ENCODE measurements at regions of chr11 and their contacts with region 1.

Region 1: DNA sequence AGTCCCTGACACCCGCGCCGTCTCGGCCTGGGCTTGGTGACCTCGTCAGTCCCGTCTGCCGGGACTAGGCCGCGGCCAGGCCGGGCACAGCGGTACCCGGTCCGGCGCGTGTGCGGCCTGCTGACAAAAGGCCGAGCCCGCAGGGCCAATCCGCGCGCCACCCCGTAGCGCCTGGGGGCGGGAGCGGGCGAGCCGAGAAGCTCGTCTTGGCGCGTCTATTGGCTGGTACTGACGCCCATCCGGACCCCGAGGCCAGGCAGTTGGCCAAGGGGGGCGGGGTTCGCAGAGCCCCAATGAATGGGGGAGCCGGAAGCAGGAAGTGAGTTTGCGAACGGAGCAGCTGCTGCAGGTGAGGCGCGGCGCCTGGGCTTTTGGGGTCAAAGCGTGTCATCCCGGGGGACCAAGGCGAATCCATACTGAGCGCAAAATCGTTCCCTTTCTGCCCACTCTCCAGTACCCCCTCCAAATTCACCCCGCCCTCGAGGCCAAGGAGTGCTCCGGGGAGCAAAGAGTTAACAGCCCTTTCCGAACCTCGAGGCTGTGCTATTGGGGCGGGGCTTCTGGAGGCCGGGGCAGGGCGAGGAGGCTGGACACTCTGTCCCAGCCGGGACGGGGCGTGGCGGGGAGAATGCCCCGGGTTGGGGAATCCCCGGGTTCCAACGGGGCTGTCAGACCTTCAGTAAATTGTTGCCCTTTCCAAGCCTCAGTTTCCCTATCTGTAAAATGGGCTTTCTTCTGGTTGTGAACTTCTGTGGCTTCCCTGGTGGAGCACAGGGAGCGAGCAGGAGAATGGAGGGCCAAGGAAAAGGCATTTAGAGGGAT is at the start of gene DPP3:
- DNase-seq: peak; percentile 99
- ATAC-seq: peak; percentile 89
- H3K4me3 ChIP-seq: peak within 1 kb of the TSS; percentile 78
- H3K27ac ChIP-seq: peak within 1 kb of the TSS; percentile 53
- H3K4me1 ChIP-seq: peaks cover 14% of the 10 kb centered on the region
- H3K27me3 ChIP-seq: no peaks in the 10 kb centered on the region
- CTCF ChIP-seq: no peak
- total RNA-seq, gene DPP3: 135 and 165 TPM in 2 replicates

Region 2: GRCh38 chr11:66195867-66196266 is 284.5 kb before region 1 on chr11:
- CTCF ChIA-PET with region 1: interaction called, 11 read pairs
- POLR2A ChIA-PET with region 1: no interaction called
- intact Hi-C with region 1: no loop called
- DNase-seq: no peak
- ATAC-seq: peak; percentile 39; the same call in 1 of the 2 replicates
- H3K4me3 ChIP-seq: no peak overlapping the region
- H3K27ac ChIP-seq: no peak overlapping the region
- H3K4me1 ChIP-seq: peaks cover 21% of the 10 kb centered on the region
- H3K27me3 ChIP-seq: no peaks in the 10 kb centered on the region
- CTCF ChIP-seq: no peak

Region 3: DNA sequence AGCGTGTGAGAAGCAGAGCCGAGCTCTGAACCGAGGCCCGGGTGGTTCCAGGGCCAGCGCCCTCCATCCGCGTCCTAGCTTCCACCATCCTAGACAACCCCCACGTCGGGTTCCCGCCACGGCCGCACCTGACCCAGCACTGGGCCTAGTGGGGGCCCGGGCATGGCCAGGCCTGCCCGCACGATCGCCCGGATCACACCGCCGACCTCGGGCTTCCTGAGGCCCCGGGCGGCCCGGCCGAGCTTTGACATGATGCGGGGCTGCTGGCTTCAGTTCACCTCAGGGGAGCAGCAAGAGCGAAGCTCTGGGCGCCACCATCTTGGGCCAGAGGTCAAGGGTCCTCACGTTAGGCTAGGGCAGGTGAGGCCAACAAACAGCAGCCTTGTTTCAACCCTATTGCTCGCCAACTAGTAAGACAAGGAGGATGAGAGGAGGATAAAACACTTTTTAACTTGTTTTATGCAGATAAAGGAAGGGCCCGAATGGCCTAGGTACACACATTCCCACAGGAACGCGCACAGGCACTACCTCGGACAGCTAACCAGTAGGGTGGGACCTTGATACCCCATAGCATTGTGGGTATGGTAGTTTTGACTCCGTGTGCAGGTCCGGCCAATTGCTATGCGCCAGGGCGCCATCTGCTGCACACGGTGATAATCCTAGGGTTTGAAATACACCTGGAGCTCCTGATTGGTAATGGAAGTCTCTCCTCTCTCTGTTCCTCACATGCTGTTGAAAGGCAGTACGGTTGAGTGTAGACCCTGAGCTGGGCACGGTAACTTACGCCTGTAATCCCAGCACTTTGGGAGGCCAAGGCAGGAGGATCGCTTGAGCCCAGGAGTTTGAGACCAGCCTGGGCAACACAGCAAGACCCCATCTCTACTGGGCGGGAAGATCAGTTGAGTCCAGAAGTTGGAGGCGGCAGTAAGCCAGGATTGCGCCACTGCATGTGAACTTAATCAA is 41.5 kb before region 1 on chr11 and contains the start of gene MRPL11:
- CTCF ChIA-PET with region 1: interaction called, 4 read pairs
- POLR2A ChIA-PET with region 1: interaction called, 4 read pairs
- intact Hi-C with region 1: loop called (anchors 1 kb)
- DNase-seq: peak; percentile 99
- ATAC-seq: peak; percentile 88
- H3K4me3 ChIP-seq: peak within 1 kb of the TSS; percentile 77
- H3K27ac ChIP-seq: peak within 1 kb of the TSS; percentile 29
- H3K4me1 ChIP-seq: peaks cover 15% of the 10 kb centered on the region
- H3K27me3 ChIP-seq: no peaks in the 10 kb centered on the region
- CTCF ChIP-seq: peak; percentile 83
- total RNA-seq, gene MRPL11: 214 and 321 TPM in 2 replicates

Region 4: GRCh38 chr11:66498506-66498905 is 18.2 kb after region 1 on chr11:
- CTCF ChIA-PET with region 1: no interaction called
- POLR2A ChIA-PET with region 1: no interaction called
- intact Hi-C with region 1: no loop called
- DNase-seq: no peak
- ATAC-seq: no peak
- H3K4me3 ChIP-seq: no peak overlapping the region
- H3K27ac ChIP-seq: no peak overlapping the region
- H3K4me1 ChIP-seq: no peaks in the 10 kb centered on the region
- H3K27me3 ChIP-seq: no peaks in the 10 kb centered on the region
- CTCF ChIP-seq: no peak